AG04450 (cell line): ENCODE measurements at regions of chr14 and their contacts with region 1.

Region 1: GRCh38 chr14:76812211-76813044 is at the start of gene ANGEL1:
- DNase-seq: peak; percentile 72
- H3K4me3 ChIP-seq: peak within 1 kb of the TSS; percentile 73
- H3K27ac ChIP-seq: no peak within 1 kb of the TSS
- H3K27me3 ChIP-seq: peaks cover 9% of the 10 kb centered on the region
- CTCF ChIP-seq: no peak
- polyA plus RNA-seq, gene ANGEL1: 12.8 and 13.1 TPM in 2 replicates

Region 2: DNA sequence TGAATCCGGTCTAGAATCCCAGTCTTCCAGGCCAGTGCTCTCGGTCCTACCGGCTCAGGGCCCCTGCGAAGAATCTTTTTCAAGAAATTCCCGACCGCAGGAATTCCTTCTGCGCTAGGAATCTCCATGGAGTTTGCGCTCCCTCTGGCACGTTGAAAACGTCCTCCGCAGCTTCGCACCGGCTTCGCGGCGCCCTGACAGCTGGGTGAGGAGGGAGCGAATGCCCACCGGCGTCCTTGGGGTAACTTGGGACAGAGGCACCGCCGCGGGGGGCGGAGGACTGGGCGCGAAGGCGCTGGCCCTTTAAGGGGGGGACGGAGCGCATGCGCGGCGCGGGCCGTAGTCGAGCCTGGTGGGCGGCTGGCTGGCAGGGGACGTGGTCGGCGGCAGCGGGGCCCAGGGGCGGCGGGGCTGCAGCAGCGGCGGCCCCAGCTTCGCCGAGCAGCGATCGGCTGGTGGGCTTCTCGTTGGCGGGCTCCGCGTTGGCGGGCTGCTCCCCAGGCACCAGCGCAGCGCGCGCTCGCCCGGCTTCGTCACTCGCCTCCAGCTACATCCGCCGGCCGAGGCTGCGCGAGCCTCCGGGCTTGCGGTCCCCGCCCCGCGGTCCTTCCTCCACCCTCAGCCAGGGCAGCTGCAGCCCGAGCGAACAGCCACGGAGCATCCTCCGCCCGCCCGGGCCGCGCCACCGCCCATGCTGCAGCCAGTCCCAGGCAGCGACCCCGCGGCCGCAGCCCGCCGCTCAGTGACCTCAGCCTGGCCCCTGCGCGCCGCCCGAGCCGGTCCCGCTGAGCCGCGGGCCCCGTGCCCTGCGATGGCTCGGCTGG is 51.1 kb before region 1 on chr14 and contains the start of gene VASH1:
- CTCF ChIA-PET with region 1: no interaction called
- POLR2A ChIA-PET with region 1: interaction called, 10 read pairs
- DNase-seq: peak; percentile 29
- H3K4me3 ChIP-seq: peak within 1 kb of the TSS; percentile 73
- H3K27ac ChIP-seq: peak within 1 kb of the TSS; percentile 3
- H3K27me3 ChIP-seq: no peaks in the 10 kb centered on the region
- CTCF ChIP-seq: no peak
- polyA plus RNA-seq, gene VASH1: 5.0 and 6.0 TPM in 2 replicates

Region 3: GRCh38 chr14:76784266-76785264 is 27.9 kb before region 1 on chr14:
- CTCF ChIA-PET with region 1: interaction called, 29 read pairs
- POLR2A ChIA-PET with region 1: interaction called, 5 read pairs
- DNase-seq: peak; percentile 34
- H3K4me3 ChIP-seq: no peak overlapping the region
- H3K27ac ChIP-seq: no peak overlapping the region
- H3K27me3 ChIP-seq: no peaks in the 10 kb centered on the region
- CTCF ChIP-seq: peak; percentile 85